ENCODE measurements at regions of chr15 and their contacts with region 1.

Region 1: DNA sequence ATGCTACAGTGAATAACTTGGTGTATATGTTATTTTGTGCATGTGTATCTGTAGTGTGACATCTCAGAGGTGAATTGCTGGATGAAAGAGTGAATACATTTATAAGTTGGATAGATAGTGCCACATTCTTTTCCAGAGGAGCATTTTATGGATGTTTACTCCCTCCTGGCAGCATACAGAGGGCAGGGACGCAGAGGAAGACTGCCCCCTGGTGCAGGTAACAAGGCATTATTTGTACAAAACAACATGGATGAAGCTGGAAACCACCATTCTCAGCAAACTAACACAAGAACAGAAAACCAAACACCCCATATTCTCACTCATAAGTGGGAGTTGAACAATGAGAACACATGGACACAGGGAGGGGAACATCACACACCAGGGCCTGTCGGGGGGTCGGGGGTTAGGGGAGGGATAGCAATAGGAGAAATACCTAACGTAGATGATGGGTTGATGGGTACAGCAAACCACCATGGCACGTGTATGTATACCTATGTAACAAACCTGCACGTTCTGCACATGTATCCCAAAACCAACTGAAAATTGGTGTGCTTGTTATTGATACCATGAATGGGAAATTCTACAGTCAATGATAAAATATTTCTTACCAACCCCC is 57.9 kb upstream of the CTXND1 start:
- DNase-seq: peak; percentile 24
- ATAC-seq: peak; percentile 78
- H3K4me3 ChIP-seq: no peak overlapping the region
- H3K27ac ChIP-seq: no peak overlapping the region
- H3K4me1 ChIP-seq: peaks cover 12% of the 10 kb centered on the region; the same call in 1 of the 2 replicates
- H3K27me3 ChIP-seq: peaks cover 0 to 2% of the 10 kb centered on the region in 2 experiments; a peak in 2 of 5 replicates
- CTCF ChIP-seq: peak; percentile 78
- EP300 ChIP-seq: no peak
- POLR2A ChIP-seq: no peak
- RAD21 ChIP-seq: peak; percentile 60

Region 2: DNA sequence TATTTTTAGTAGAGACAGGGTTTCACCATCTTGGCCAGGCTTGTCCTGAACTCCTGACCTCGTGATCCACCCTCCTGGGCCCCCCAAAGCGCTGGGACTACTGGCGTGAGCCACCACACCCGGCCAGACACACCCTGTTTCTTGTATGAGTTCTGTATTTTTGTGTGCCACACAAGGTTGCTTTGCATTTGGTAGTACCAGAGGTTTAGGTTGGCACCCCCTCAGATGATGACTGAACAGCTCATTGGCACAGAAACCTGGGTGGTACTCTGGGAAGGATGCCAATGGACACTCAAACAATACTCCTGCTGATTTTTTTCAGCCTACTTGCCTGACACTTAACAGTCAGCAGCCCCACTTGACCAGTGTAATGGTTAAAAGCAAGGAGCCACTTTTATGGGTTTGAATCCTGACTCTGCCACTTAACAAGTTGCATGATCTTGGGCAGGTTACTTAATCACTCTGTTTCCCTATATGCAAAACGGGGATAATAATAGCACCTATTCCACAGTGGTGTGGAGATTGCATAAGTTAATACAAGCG is 299.7 kb before region 1 on chr15:
- CTCF ChIA-PET with region 1: no interaction called
- POLR2A ChIA-PET with region 1: no interaction called
- in situ Hi-C with region 1: loop called (anchors 25 kb)
- intact Hi-C with region 1: no loop called
- DNase-seq: no peak
- ATAC-seq: no peak
- H3K4me3 ChIP-seq: no peak overlapping the region
- H3K27ac ChIP-seq: no peak overlapping the region
- H3K4me1 ChIP-seq: peaks cover 32% of the 10 kb centered on the region
- H3K27me3 ChIP-seq: no peaks in the 10 kb centered on the region
- CTCF ChIP-seq: no peak
- EP300 ChIP-seq: no peak
- POLR2A ChIP-seq: no peak
- RAD21 ChIP-seq: no peak

Region 3: DNA sequence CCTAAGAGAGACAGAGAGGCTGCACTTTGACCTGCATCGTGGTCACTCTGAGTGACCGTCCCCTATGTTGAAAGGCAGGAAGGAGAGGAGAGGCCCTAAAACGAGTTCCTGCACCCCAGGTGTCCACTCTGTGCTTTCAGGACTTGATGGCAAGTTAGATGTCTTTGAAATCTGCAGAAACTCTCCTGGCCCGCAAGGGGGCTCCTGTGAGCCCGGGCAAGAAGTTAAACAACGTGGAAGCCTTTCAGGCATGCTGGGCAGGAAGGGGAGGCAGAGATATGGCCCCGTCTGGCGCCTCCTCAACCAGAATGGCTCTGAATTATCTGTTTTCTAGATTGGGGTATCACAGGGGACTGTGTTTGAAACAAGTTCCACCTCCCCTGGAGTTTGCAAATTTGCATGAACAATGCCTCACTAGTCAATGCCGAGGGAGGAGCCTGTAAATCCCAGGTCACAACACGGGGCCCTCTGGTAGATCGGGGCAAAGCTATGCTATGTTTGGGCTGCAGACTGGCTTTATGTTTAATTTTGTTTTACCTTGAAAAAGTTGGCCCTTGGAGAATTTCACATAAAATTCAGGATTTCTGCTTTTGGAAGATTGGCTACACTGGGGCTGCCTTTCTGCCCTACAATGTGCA is 67.6 kb before region 1 on chr15:
- CTCF ChIA-PET with region 1: interaction called, 10 read pairs
- POLR2A ChIA-PET with region 1: no interaction called
- in situ Hi-C with region 1: loop called (anchors 5 kb)
- intact Hi-C with region 1: loop called (anchors 1 kb)
- DNase-seq: peak; percentile 50
- ATAC-seq: peak; percentile 81
- H3K4me3 ChIP-seq: peak overlapping the region in 1 of 3 experiments; percentile 21; a peak in 1 of 6 replicates
- H3K27ac ChIP-seq: no peak overlapping the region
- H3K4me1 ChIP-seq: peaks cover 44% of the 10 kb centered on the region
- H3K27me3 ChIP-seq: no peaks in the 10 kb centered on the region
- CTCF ChIP-seq: peak; percentile 78
- EP300 ChIP-seq: no peak
- POLR2A ChIP-seq: no peak
- RAD21 ChIP-seq: peak; percentile 70

Measured in HepG2 (cell line).